Left lung (tissue), 14 donors: ENCODE measurements at regions of chr1 and their contacts with region 1.

Region 1: DNA sequence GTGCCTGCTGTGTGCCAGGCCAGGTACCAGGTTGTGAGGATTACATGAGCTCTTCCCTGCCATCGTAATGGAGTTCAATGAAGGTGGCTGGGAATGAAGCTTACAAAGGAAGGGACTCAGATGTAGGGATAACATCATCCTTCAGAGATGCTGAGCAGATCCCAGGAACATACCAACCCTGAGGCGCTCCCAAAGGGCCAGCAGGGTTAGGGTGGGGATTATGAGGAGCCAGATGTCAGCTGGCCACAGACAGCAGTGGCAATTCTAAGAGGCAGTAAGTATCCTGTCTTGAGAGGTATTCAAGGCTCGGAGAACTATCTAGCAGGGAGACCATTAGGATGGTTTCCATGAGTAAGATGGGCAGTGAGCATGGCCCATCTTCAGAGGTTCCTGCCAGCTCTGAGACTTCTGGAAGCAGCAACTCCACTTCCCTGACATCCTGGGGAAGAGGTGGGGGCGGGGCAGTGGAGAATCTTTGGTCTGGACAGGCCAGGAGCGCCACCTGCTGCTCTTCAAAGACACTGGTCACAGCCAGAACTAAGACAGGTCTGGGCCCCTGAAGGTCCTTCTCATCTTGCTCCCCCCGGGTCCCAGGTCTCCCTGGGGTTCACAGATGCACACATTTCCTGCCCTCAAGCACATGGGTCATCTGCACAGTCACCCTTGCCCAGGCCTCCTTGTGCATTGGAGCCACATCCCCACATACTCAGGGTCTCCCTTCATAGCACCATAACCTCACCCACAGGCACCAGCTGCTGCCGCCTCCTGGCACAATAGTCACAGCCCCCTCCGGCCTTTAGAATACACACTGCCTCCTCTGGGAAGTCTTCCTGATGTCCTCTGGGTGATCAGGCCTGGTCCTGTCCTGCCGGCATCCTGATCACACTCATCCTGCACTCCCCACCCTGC is 2.7 kb upstream of the SDC3 start:
- DNase-seq: peak; percentile 82 to 91 (median 88)
- ATAC-seq: peak; percentile 83
- H3K4me3 ChIP-seq: no peak overlapping the region
- H3K27ac ChIP-seq: no peak overlapping the region
- H3K4me1 ChIP-seq: peaks cover 6 to 55% of the 10 kb centered on the region in 2 donors
- H3K27me3 ChIP-seq: peaks cover 0 to 46% of the 10 kb centered on the region in 2 donors
- CTCF ChIP-seq: peak; percentile 71 to 87

Region 2: GRCh38 chr1:30779294-30780071 is 131.8 kb before region 1 on chr1:
- intact Hi-C with region 1: loop called in 1 of 2 experiments (anchors 5 kb)
- DNase-seq: peak; percentile 53 to 97 (median 74)
- ATAC-seq: peak; percentile 78
- H3K4me3 ChIP-seq: no peak overlapping the region
- H3K27ac ChIP-seq: no peak overlapping the region
- H3K4me1 ChIP-seq: peaks cover 0 to 40% of the 10 kb centered on the region in 2 donors
- H3K27me3 ChIP-seq: no peaks in the 10 kb centered on the region
- CTCF ChIP-seq: peak; percentile 92 to 97

Region 3: GRCh38 chr1:30801771-30802198 is 109.5 kb before region 1 on chr1:
- intact Hi-C with region 1: loop called (anchors 5 to 10 kb)
- DNase-seq: peak; percentile 72 to 95 (median 78)
- ATAC-seq: peak; percentile 69
- H3K4me3 ChIP-seq: no peak overlapping the region
- H3K27ac ChIP-seq: no peak overlapping the region
- H3K4me1 ChIP-seq: peaks cover 17 to 26% of the 10 kb centered on the region in 2 donors
- H3K27me3 ChIP-seq: peaks cover 0 to 23% of the 10 kb centered on the region in 2 donors
- CTCF ChIP-seq: peak; percentile 93 to 95

Region 4: DNA sequence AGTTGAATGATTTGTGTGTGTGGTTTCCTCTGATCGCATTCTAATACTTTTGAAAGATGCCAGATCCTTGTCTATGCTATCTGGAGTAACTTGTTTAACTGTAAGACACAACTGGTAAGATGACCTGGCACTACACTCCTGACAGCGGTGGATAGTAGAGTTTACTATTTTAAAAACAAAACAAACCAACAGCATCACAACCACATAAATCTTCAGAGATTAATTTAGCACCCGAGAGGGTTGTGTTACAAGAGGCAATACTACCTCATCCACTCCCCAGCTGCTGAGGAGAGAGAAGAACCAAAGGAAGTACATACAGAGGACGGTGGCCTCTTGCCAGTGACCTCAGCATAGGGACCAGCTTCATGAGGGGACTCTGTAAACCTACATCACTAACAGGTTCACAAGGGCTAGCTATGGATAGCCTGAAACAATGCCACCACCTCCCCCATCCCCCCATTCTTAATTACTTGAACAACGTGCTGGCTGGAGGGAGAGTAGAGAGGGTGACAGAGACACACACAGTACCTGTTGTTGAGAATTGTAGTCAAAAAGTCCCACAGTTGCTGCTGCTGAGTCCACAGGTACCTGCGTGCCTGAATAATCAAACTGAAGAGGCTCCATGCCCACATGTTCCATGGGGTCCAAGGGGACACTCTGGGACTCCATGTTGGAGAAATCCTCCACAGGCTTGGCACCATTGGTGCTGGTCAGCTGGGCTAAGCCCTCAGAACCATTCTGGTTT is 80.7 kb after region 1 on chr1:
- intact Hi-C with region 1: no loop called
- DNase-seq: no peak
- ATAC-seq: no peak
- H3K4me3 ChIP-seq: no peak overlapping the region
- H3K27ac ChIP-seq: no peak overlapping the region
- H3K4me1 ChIP-seq: peaks cover 10 to 44% of the 10 kb centered on the region in 2 donors
- H3K27me3 ChIP-seq: no peaks in the 10 kb centered on the region
- CTCF ChIP-seq: no peak

Region 5: GRCh38 chr1:31390038-31390437 is 478.7 kb after region 1 on chr1:
- intact Hi-C with region 1: no loop called
- DNase-seq: peak in 2 of 4 donors; percentile 56 to 75
- ATAC-seq: peak; percentile 75
- H3K4me3 ChIP-seq: no peak overlapping the region
- H3K27ac ChIP-seq: no peak overlapping the region
- H3K4me1 ChIP-seq: peaks cover 7 to 9% of the 10 kb centered on the region in 2 donors
- H3K27me3 ChIP-seq: peaks cover 0 to 4% of the 10 kb centered on the region in 2 donors
- CTCF ChIP-seq: no peak